H1 (cell line): ENCODE measurements at regions of chr7 and their contacts with region 1.

Region 1: DNA sequence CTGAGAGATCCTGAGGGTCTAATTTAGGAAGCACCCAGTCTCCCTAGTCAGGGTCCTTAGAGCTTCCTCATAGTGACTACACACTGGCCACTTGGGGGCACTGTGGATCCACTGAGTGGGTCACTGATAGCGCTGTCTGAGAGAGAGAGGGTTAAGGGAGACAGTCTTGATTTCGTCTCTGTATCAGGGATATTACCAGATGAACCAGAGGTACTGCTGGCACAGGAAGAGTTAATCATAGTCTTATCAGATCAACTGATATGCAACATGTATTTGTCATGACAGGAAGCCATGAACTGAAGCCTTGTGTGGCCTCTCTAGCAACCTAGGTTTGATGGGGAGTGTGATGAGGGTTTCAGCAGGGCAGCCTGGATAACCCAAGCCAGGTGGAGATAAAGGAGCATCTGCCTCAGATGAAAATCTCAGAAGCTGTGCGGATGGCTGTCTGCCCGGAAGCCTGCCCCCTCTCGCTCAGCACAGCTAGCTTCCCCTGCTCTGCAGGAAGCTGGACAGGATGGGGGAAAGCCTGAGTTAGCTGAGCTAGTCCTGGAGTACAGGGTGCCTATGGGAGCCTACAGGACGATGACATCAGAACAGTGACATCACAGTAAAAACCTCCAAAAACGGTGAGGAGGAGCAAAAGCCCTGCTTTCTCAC is 214.0 kb upstream of the PRSS1 start:
- DNase-seq: peak in 1 of 2 experiments; percentile 85
- H3K4me3 ChIP-seq: no peak overlapping the region
- H3K27ac ChIP-seq: no peak overlapping the region
- H3K4me1 ChIP-seq: peaks cover 0 to 2% (median 0%) of the 10 kb centered on the region in 4 experiments; a peak in 1 of 7 replicates
- H3K27me3 ChIP-seq: no peaks in the 10 kb centered on the region; a peak in 1 of 7 replicates
- CTCF ChIP-seq: peak; percentile 76 to 95 (median 91)
- EP300 ChIP-seq: no peak
- POLR2A ChIP-seq: no peak
- RAD21 ChIP-seq: peak; percentile 94

Region 2: GRCh38 chr7:141460781-141461715 is 1074.2 kb before region 1 on chr7:
- CTCF ChIA-PET with region 1: no interaction called
- POLR2A ChIA-PET with region 1: no interaction called
- DNase-seq: no peak
- H3K4me3 ChIP-seq: no peak overlapping the region
- H3K27ac ChIP-seq: no peak overlapping the region
- H3K4me1 ChIP-seq: peaks cover 0 to 6% (median 0%) of the 10 kb centered on the region in 4 experiments; a peak in 2 of 7 replicates
- H3K27me3 ChIP-seq: no peaks in the 10 kb centered on the region
- CTCF ChIP-seq: no peak
- EP300 ChIP-seq: no peak
- POLR2A ChIP-seq: no peak
- RAD21 ChIP-seq: no peak

Region 3: GRCh38 chr7:142459551-142459963 is 75.7 kb before region 1 on chr7:
- CTCF ChIA-PET with region 1: interaction called, 220 read pairs
- POLR2A ChIA-PET with region 1: no interaction called
- DNase-seq: peak in 1 of 2 experiments; percentile 53
- H3K4me3 ChIP-seq: no peak overlapping the region
- H3K27ac ChIP-seq: no peak overlapping the region
- H3K4me1 ChIP-seq: no peaks in the 10 kb centered on the region
- H3K27me3 ChIP-seq: no peaks in the 10 kb centered on the region
- CTCF ChIP-seq: peak; percentile 33 to 82 (median 81)
- EP300 ChIP-seq: no peak
- POLR2A ChIP-seq: no peak
- RAD21 ChIP-seq: peak; percentile 65 to 74

Region 4: GRCh38 chr7:142516038-142516501 is 19.2 kb before region 1 on chr7:
- CTCF ChIA-PET with region 1: interaction called, 31 read pairs
- POLR2A ChIA-PET with region 1: no interaction called
- DNase-seq: peak in 1 of 2 experiments; percentile 56
- H3K4me3 ChIP-seq: no peak overlapping the region
- H3K27ac ChIP-seq: no peak overlapping the region
- H3K4me1 ChIP-seq: peaks cover 0 to 3% (median 0%) of the 10 kb centered on the region in 4 experiments; a peak in 1 of 7 replicates
- H3K27me3 ChIP-seq: no peaks in the 10 kb centered on the region
- CTCF ChIP-seq: peak; percentile 53 to 81 (median 75)
- EP300 ChIP-seq: no peak
- POLR2A ChIP-seq: no peak
- RAD21 ChIP-seq: peak; percentile 61 to 67

Region 5: GRCh38 chr7:142557971-142558582 is 22.8 kb after region 1 on chr7:
- CTCF ChIA-PET with region 1: interaction called, 43 read pairs
- POLR2A ChIA-PET with region 1: no interaction called
- DNase-seq: peak; percentile 23 to 82
- H3K4me3 ChIP-seq: no peak overlapping the region
- H3K27ac ChIP-seq: no peak overlapping the region
- H3K4me1 ChIP-seq: no peaks in the 10 kb centered on the region
- H3K27me3 ChIP-seq: no peaks in the 10 kb centered on the region; a peak in 1 of 7 replicates
- CTCF ChIP-seq: peak; percentile 79 to 95 (median 84)
- EP300 ChIP-seq: no peak
- POLR2A ChIP-seq: no peak
- RAD21 ChIP-seq: peak; percentile 45 to 65; a peak in 3 of 4 replicates

Region 6: GRCh38 chr7:142603870-142604448 is 68.7 kb after region 1 on chr7:
- CTCF ChIA-PET with region 1: interaction called, 16 read pairs
- POLR2A ChIA-PET with region 1: no interaction called
- DNase-seq: peak in 1 of 2 experiments; percentile 58
- H3K4me3 ChIP-seq: peak overlapping the region in 1 of 4 experiments; percentile 43; a peak in 1 of 8 replicates
- H3K27ac ChIP-seq: no peak overlapping the region
- H3K4me1 ChIP-seq: no peaks in the 10 kb centered on the region
- H3K27me3 ChIP-seq: no peaks in the 10 kb centered on the region
- CTCF ChIP-seq: peak in 2 of 3 experiments; percentile 75 to 77; a peak in 3 of 4 replicates
- EP300 ChIP-seq: no peak
- POLR2A ChIP-seq: no peak
- RAD21 ChIP-seq: peak; percentile 86

Region 7: GRCh38 chr7:142626420-142627035 is 91.3 kb after region 1 on chr7:
- CTCF ChIA-PET with region 1: interaction called, 16 read pairs
- POLR2A ChIA-PET with region 1: no interaction called
- DNase-seq: peak in 1 of 2 experiments; percentile 94
- H3K4me3 ChIP-seq: no peak overlapping the region
- H3K27ac ChIP-seq: no peak overlapping the region
- H3K4me1 ChIP-seq: peaks cover 0 to 3% (median 0%) of the 10 kb centered on the region in 4 experiments; a peak in 1 of 7 replicates
- H3K27me3 ChIP-seq: no peaks in the 10 kb centered on the region; a peak in 1 of 7 replicates
- CTCF ChIP-seq: peak; percentile 60 to 85 (median 79)
- EP300 ChIP-seq: no peak
- POLR2A ChIP-seq: no peak
- RAD21 ChIP-seq: peak; percentile 55 to 62